Panc1 (cell line): ENCODE measurements at regions of chr7 and their contacts with region 1.

Region 1: GRCh38 chr7:139016931-139017511 is 18.8 kb downstream of the ZC3HAV1L start:
- DNase-seq: peak; percentile 66
- ATAC-seq: peak; percentile 97
- H3K4me3 ChIP-seq: no peak overlapping the region
- H3K27ac ChIP-seq: no peak overlapping the region
- H3K4me1 ChIP-seq: no peaks in the 10 kb centered on the region
- H3K27me3 ChIP-seq: no peaks in the 10 kb centered on the region
- CTCF ChIP-seq: peak; percentile 88

Region 2: DNA sequence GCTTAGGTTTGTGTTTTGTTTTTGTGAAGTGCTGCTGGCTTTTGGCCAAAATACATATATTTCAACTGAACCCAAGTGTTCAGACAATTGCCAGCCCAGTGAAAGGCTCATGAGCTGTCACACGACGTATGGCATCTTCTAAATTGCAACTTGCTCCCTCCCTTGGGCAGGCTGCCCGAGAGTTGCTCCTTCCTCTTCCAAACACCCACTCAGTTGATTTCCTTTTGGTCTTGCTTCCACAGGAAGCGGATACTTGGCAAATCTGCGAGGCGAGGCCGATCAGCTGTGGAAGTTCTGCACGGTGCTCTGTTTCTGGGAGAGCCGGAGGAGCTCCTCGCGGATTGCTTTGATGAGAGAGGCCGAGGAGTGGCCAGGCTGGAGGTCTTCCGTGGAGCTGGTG is 179.4 kb before region 1 on chr7:
- CTCF ChIA-PET with region 1: no interaction called
- POLR2A ChIA-PET with region 1: no interaction called
- in situ Hi-C with region 1: no loop called
- intact Hi-C with region 1: no loop called
- DNase-seq: no peak
- ATAC-seq: no peak
- H3K4me3 ChIP-seq: no peak overlapping the region
- H3K27ac ChIP-seq: no peak overlapping the region
- H3K4me1 ChIP-seq: no peaks in the 10 kb centered on the region
- H3K27me3 ChIP-seq: no peaks in the 10 kb centered on the region
- CTCF ChIP-seq: no peak

Region 3: DNA sequence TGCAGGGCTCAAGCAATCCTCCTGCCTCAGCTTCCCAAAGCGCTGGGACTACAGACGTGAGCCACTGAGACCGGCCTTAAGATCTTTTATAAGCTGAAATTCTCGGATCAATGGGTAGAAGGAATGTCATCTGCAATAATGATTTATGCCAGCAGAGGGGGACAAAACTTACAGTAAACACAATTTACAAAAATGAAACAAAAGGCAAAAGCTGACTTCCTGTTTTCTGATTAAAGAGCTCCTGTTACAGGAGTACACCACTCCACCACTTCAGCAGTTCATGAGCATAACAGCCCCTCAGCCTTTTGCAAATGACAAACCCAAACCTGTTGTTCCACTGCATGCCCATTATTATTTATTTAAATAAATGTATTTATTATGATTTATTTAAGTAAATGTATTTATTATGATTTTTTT is 130.5 kb before region 1 on chr7:
- CTCF ChIA-PET with region 1: interaction called, 3 read pairs
- POLR2A ChIA-PET with region 1: no interaction called
- in situ Hi-C with region 1: no loop called
- intact Hi-C with region 1: loop called (anchors 10 kb)
- DNase-seq: no peak
- ATAC-seq: no peak
- H3K4me3 ChIP-seq: no peak overlapping the region
- H3K27ac ChIP-seq: 0 out of 2 replicates have a peak overlapping the region, but pooled peaks have one; percentile 40
- H3K4me1 ChIP-seq: peaks cover 39% of the 10 kb centered on the region
- H3K27me3 ChIP-seq: no peaks in the 10 kb centered on the region
- CTCF ChIP-seq: peak; percentile 77

Region 4: DNA sequence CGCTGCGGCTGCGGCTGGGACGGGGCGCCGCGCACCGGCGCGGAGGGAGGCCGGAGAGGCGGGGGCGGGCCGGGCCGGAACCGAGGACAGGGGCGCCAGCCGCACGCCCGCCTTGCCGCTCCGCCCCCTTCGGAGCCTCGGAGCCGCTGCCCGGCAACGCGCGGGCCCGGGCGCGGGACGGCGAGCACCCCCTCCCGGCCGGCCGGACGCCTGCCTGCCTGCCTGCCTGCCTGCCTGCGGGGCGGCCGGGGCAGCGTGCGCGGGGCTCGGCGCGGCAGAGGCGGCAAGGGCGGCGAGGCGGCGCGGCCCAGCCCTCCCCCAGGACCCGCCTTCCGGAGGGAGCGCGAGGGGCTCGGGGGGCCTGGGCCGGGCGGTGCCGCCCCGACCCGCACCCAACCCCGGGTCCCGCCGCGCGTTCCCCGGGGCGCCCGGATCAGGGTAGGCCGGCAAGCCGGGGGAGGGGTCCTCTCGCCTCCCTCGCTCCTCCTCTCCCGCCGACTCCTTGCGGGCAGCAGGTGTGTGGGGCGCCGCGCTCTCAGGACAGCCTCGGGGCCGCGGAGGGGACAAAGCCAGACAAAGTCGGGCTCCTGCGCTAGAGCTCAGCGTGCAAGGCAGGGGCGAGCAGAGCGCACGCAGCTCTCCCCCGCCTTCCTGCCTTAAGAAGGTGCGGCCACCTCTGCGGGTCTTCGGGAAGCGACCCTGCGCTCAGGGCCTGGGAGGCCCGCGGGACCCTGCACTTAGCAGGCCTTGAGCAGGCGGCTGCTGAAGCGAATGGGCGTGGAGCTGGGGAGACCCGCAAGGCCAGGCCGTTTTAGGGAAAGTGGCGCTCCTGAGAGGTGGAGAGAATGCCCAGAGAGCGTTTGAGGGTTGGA is 35.5 kb before region 1 on chr7 and contains the start of gene KIAA1549:
- CTCF ChIA-PET with region 1: no interaction called
- POLR2A ChIA-PET with region 1: interaction called, 12 read pairs
- in situ Hi-C with region 1: no loop called
- intact Hi-C with region 1: no loop called
- DNase-seq: no peak
- ATAC-seq: peak; percentile 95
- H3K4me3 ChIP-seq: peak within 1 kb of the TSS; percentile 78 to 90
- H3K27ac ChIP-seq: peak within 1 kb of the TSS; percentile 81
- H3K4me1 ChIP-seq: peaks cover 22% of the 10 kb centered on the region
- H3K27me3 ChIP-seq: no peaks in the 10 kb centered on the region
- CTCF ChIP-seq: peak; percentile 82
- total RNA-seq, gene KIAA1549: 14.1 TPM

Region 5: GRCh38 chr7:139034855-139035585 is 18.0 kb after region 1 on chr7:
- CTCF ChIA-PET with region 1: interaction called, 4 read pairs
- POLR2A ChIA-PET with region 1: interaction called, 11 read pairs
- in situ Hi-C with region 1: no loop called
- intact Hi-C with region 1: no loop called
- DNase-seq: no peak
- ATAC-seq: peak; percentile 58
- H3K4me3 ChIP-seq: peak overlapping the region; percentile 76 to 78
- H3K27ac ChIP-seq: peak overlapping the region; percentile 92
- H3K4me1 ChIP-seq: peaks cover 15% of the 10 kb centered on the region
- H3K27me3 ChIP-seq: no peaks in the 10 kb centered on the region
- CTCF ChIP-seq: no peak

Region 6: DNA sequence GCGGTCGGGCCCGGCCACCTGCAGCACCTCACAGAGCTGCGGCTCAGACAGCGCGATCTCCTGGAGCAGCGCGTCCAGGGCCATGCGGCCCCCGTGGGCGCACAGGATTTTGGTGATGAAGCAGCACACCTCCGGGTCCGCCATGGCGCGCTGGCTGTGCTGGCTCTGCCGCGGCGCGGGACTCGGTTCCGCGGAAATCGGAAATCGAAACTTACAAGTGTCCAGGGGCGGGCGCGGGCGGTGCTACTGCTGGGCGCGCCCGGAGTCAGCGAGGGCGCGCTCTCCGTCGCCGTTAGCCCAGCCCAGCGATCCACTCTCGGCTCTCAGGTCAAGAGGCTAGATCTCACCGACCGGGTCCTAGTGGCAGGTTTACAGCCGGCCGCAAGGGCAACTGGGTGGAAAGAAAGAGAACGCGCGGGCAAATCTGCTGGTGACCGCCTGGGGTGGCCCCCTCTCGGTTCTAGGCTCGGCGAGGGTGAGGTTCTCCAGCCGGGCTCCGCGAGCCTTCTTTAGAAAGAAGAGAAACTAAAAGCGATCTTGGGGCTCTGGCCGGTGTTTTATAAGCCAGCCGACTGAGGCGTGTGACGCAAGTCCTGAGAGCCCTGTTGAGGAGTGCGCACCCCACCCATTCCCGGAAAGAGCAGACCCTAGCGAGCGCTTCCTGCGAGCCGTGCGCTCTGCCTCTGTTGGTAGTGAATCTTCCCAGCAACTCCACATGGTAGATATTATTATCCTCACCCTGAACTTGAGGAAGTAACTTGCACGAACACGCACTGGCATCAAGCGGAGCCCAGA is 92.4 kb after region 1 on chr7 and contains the start of gene ZC3HAV1:
- CTCF ChIA-PET with region 1: interaction called, 10 read pairs
- POLR2A ChIA-PET with region 1: no interaction called
- in situ Hi-C with region 1: no loop called
- intact Hi-C with region 1: no loop called
- DNase-seq: peak; percentile 77
- ATAC-seq: peak; percentile 91
- H3K4me3 ChIP-seq: peak within 1 kb of the TSS; percentile 75 to 86
- H3K27ac ChIP-seq: peak within 1 kb of the TSS; percentile 99
- H3K4me1 ChIP-seq: peaks cover 23% of the 10 kb centered on the region; the same call in 1 of the 2 replicates
- H3K27me3 ChIP-seq: no peaks in the 10 kb centered on the region
- CTCF ChIP-seq: no peak
- total RNA-seq, gene ZC3HAV1: 47.1 TPM

Region 7: GRCh38 chr7:139127648-139128047 is 110.6 kb after region 1 on chr7:
- CTCF ChIA-PET with region 1: no interaction called
- POLR2A ChIA-PET with region 1: no interaction called
- in situ Hi-C with region 1: no loop called
- intact Hi-C with region 1: loop called (anchors 5 kb)
- DNase-seq: no peak
- ATAC-seq: no peak
- H3K4me3 ChIP-seq: no peak overlapping the region
- H3K27ac ChIP-seq: no peak overlapping the region
- H3K4me1 ChIP-seq: no peaks in the 10 kb centered on the region; the same call in none of the 2 replicates
- H3K27me3 ChIP-seq: peaks cover 6% of the 10 kb centered on the region; the same call in 1 of the 2 replicates
- CTCF ChIP-seq: peak; percentile 25; the same call in 1 of the 2 replicates